ENCODE measurements at regions of chr15 and their contacts with region 1.

Region 1: GRCh38 chr15:69593981-69594966 is 141.7 kb downstream of the RPLP1 start:
- DNase-seq: peak; percentile 72 to 82 (median 81)
- ATAC-seq: peak; percentile 71 to 83
- H3K4me3 ChIP-seq: no peak overlapping the region
- H3K27ac ChIP-seq: peak overlapping the region; percentile 91
- H3K4me1 ChIP-seq: peaks cover 20% of the 10 kb centered on the region
- H3K27me3 ChIP-seq: no peaks in the 10 kb centered on the region

Region 2: DNA sequence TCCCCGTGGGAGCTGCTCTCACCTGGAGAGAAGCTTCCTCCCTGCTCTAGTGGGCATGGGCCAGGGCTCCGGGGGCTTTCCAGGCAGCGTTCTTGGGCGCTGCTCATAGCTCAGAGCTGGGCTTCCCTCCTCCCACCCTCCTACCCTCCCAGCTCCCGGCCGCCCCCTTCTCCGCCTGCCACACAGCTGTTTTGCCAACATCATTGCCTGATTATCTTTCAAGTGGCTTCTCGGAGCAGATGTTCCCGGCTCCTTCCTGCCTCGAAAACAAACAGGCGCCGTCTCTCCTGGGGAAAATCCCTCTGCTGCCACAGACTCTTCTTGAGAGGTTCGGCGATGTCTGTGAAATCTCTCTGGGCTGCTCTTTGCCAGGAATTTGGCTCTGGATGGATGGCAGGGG is 53.9 kb after region 1 on chr15:
- intact Hi-C with region 1: no loop called
- DNase-seq: no peak
- ATAC-seq: no peak
- H3K4me3 ChIP-seq: no peak overlapping the region
- H3K27ac ChIP-seq: no peak overlapping the region
- H3K4me1 ChIP-seq: no peaks in the 10 kb centered on the region
- H3K27me3 ChIP-seq: no peaks in the 10 kb centered on the region

Region 3: GRCh38 chr15:70097337-70098169 is 503.3 kb after region 1 on chr15 and contains the start of gene TLE3:
- intact Hi-C with region 1: loop called in 1 of 4 experiments (anchors 10 kb)
- DNase-seq: peak; percentile 99 to 100 (median 99)
- ATAC-seq: peak; percentile 77 to 81
- H3K4me3 ChIP-seq: peak within 1 kb of the TSS; percentile 91
- H3K27ac ChIP-seq: peak within 1 kb of the TSS; percentile 86
- H3K4me1 ChIP-seq: peaks cover 13% of the 10 kb centered on the region
- H3K27me3 ChIP-seq: no peaks in the 10 kb centered on the region
- total RNA-seq, gene TLE3: 20.6 to 35.4 (median 27.4) TPM